ENCODE measurements at regions of chr1 and their contacts with region 1.

Region 1: DNA sequence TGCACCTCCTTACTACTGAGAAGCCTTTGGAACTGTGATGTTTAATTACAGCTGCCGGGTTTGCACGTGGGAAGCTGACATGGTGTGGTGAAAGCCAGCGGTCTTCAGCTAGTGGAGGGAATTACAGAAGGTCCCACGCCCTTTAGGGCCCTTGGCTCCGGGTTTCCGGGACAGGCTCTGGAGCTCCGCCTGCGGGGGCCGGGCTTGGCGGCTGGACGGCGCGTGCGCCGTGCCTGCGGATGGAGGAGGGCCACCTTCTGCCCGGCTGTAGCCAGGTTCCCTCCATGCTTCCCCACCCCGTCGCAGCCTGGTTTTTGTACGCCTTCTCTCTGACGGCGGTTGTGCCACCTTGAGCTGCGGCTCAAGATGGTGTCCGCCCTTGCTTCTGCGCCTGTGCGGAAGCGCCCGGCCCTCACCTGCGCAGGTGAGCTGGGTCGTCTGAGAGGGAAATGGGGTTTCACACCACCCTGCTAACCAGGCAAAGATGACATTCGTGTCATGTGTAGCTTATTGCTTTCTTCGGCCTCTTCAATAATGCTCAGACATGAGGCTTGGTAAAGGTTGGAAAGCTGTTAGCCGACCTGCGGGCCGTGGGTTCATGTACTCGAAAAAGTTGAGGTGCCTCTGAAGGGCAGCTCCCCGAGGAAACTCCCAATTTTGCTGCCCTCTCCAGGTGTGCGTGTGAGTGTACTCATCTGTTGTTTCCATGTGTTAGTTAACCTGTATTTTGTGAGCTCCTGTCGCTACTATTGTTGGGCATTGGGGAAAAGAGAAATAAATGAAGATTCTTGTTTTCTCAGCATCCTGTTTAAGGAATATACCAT is 36.6 kb upstream of the OPRD1 start:
- DNase-seq: peak; percentile 55 to 82 (median 72)
- ATAC-seq: peak; percentile 92 to 95
- H3K4me3 Mint-ChIP-seq: peak overlapping the region; percentile 76 to 89 (median 83)
- H3K27ac Mint-ChIP-seq: peak overlapping the region; percentile 64 to 94 (median 89)
- H3K4me1 Mint-ChIP-seq: peaks cover 0 to 15% (median 7%) of the 10 kb centered on the region in 4 donors
- H3K27me3 Mint-ChIP-seq: no peaks in the 10 kb centered on the region

Region 2: DNA sequence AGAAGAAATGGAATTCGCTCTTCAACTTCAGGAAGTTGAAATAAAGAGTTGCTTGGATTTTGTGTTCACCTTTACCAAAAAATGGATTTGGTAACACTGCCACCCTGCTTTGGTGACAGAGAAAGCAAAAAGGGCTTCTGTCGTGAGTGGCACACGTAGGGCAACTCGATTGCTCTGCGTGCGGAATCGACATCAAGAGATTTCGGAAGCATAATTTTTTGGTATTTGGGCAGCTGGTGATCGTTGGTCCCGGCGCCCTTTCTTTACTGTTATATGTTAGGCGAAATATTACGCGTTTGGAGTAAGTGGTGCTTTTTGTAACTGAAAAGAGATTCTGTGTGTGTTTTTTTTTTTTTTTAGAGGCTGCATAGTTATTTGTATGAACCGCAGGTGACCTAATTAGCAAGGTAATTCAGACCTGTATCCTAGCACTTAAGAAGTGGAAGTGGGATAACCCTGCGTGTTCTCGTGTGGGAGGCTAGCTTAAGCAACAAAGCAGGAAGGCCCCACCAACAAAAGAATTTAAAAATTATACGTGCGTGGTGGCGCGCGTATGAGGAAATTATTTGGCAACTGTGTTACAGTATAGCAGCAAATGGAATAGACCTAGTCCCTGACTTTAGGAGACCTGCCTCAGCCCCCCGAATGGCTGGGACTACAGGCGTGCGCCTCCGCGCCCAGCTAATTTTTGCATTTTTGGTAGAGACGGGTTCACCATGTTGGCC is 126.7 kb before region 1 on chr1 and contains the start of gene RNU11:
- POLR2A ChIA-PET with region 1: interaction called, 13 read pairs
- DNase-seq: peak; percentile 57 to 99 (median 88)
- ATAC-seq: peak; percentile 78 to 80
- H3K4me3 Mint-ChIP-seq: peak within 1 kb of the TSS; percentile 78 to 97 (median 91)
- H3K27ac Mint-ChIP-seq: peak within 1 kb of the TSS; percentile 98 to 100 (median 99)
- H3K4me1 Mint-ChIP-seq: peaks cover 16 to 38% (median 32%) of the 10 kb centered on the region in 4 donors
- H3K27me3 Mint-ChIP-seq: no peaks in the 10 kb centered on the region
- polyA plus RNA-seq, gene RNU11: not detected

Measured in naive thymus-derived CD8-positive, alpha-beta T cell (primary cell).